ENCODE measurements at regions of chr2 and their contacts with region 1.

Region 1: GRCh38 chr2:178530625-178531142 is 50.4 kb downstream of the PLEKHA3 start:
- DNase-seq: peak; percentile 43
- ATAC-seq: peak; percentile 95
- H3K4me3 Mint-ChIP-seq: peak overlapping the region; percentile 81
- H3K27ac Mint-ChIP-seq: peak overlapping the region; percentile 91
- H3K4me1 Mint-ChIP-seq: peaks cover 57% of the 10 kb centered on the region
- H3K27me3 Mint-ChIP-seq: no peaks in the 10 kb centered on the region
- CTCF ChIP-seq: no peak

Region 2: GRCh38 chr2:178506524-178506923 is 24.2 kb before region 1 on chr2:
- CTCF ChIA-PET with region 1: no interaction called
- POLR2A ChIA-PET with region 1: no interaction called
- intact Hi-C with region 1: loop called (anchors 2 kb)
- DNase-seq: no peak
- ATAC-seq: no peak
- H3K4me3 Mint-ChIP-seq: no peak overlapping the region
- H3K27ac Mint-ChIP-seq: no peak overlapping the region
- H3K4me1 Mint-ChIP-seq: no peaks in the 10 kb centered on the region
- H3K27me3 Mint-ChIP-seq: no peaks in the 10 kb centered on the region
- CTCF ChIP-seq: no peak

Region 3: DNA sequence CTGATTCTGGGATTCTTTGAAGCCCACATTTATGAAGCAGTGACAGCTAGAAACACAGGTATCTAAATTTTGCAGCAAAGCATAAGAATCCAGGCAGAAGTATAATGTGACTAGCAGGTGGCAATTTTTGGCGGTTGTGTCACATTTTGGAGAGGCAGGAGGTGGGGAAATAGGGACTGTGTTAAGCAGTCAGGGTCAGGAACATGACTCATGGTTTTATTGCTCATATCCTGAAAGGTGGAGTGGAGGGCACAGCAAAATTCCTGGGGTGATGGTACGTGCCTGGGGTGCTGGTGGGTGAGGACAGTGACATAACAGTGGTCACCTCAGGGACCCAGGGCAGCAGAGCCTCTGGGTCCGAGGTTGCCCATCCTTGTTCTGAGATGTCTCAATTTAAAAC is 340.0 kb after region 1 on chr2:
- CTCF ChIA-PET with region 1: no interaction called
- POLR2A ChIA-PET with region 1: no interaction called
- intact Hi-C with region 1: no loop called
- DNase-seq: no peak
- ATAC-seq: no peak
- H3K4me3 Mint-ChIP-seq: no peak overlapping the region
- H3K27ac Mint-ChIP-seq: no peak overlapping the region
- H3K4me1 Mint-ChIP-seq: no peaks in the 10 kb centered on the region
- H3K27me3 Mint-ChIP-seq: no peaks in the 10 kb centered on the region
- CTCF ChIP-seq: no peak

Measured in activated B cell treated with CpG ODN at 0.5 μM for 24 hours (primary cell).